MCF 10A (cell line): ENCODE measurements at regions of chr1 and their contacts with region 1.

Region 1: DNA sequence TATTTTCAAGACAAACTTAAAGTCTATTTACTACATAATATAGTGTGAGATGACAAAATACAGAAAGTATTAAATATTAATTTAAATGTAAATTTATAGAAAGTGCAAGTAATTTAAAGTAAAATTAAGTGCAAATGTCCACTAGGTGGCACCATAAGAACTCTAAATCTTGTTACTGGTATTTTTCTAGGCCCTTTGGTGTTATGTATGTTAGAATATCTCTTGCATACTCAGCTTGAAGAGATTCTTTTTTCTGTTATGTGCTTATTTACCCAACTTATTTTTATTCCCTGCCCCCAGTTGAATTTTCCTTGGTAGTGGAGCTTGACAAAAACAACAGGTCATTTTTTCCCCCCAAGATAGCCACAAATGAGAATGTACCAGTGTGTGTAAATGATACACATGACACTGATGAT is 71.5 kb downstream of the RPS6KC1 start:
- DNase-seq: peak; percentile 75
- H3K4me3 Mint-ChIP-seq: no peak overlapping the region
- H3K27ac Mint-ChIP-seq: peak overlapping the region; percentile 61
- H3K4me1 Mint-ChIP-seq: peaks cover 26% of the 10 kb centered on the region
- H3K27me3 Mint-ChIP-seq: no peaks in the 10 kb centered on the region
- CTCF ChIP-seq: peak; percentile 74

Region 2: DNA sequence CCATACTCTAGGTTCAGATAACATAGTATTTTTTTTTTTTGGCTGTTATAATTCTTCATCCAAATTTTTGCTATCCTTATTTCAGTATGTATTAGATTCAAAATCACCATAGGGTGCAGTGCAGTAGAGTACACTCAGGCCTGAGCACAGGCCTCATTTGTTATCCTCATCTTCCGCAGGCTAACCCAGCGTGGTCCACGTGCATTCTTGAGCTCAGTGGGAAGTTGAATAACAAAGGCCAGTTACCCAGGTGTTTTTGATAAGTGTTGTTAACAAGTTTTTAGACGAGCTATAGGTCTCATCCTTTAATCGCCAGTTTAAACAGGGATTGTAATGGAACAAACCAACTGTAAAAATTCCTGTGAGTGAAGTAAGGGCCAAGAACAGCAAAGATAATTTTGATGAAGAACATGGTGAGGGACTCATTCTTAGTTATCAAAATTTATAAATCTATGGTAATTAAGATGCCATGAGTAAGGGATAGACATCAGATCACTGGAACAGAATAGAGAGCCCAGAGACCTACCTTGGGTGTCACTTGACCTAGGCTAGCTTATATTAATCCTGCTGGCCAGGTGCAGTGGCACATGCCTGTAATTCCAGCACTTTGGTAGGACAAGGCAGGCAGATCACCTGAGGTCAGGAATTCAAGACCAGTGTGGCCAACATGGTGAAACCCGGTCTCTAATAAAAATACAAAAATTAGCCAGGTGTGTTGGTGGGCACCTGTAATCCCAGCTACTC is 242.4 kb before region 1 on chr1:
- CTCF ChIA-PET with region 1: no interaction called
- POLR2A ChIA-PET with region 1: no interaction called
- intact Hi-C with region 1: no loop called
- DNase-seq: no peak
- H3K4me3 Mint-ChIP-seq: no peak overlapping the region
- H3K27ac Mint-ChIP-seq: peak overlapping the region; percentile 8
- H3K4me1 Mint-ChIP-seq: peaks cover 5% of the 10 kb centered on the region
- H3K27me3 Mint-ChIP-seq: no peaks in the 10 kb centered on the region
- CTCF ChIP-seq: no peak

Region 3: DNA sequence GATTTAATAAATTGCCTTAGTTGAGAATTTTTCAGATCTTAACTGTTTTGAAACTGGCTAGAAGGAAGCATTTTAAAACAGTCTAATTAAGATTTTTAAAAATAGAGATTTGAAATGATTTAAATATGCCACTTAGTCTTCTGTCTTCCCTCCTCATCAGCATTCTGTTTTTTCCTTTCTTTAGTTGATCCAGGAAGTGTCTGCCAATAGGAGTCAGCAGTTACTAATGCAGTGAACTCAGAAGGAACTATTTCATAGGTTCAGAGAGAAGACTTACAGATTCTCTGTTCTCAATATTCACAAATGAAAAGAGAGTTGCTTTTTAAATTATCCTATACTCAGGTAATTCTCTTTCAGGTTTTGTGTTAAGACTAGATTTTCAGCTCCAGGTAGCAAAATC is 13.1 kb after region 1 on chr1:
- CTCF ChIA-PET with region 1: interaction called, 32 read pairs
- POLR2A ChIA-PET with region 1: interaction called, 5 read pairs
- intact Hi-C with region 1: no loop called
- DNase-seq: no peak
- H3K4me3 Mint-ChIP-seq: no peak overlapping the region
- H3K27ac Mint-ChIP-seq: no peak overlapping the region
- H3K4me1 Mint-ChIP-seq: no peaks in the 10 kb centered on the region
- H3K27me3 Mint-ChIP-seq: no peaks in the 10 kb centered on the region
- CTCF ChIP-seq: no peak

Region 4: DNA sequence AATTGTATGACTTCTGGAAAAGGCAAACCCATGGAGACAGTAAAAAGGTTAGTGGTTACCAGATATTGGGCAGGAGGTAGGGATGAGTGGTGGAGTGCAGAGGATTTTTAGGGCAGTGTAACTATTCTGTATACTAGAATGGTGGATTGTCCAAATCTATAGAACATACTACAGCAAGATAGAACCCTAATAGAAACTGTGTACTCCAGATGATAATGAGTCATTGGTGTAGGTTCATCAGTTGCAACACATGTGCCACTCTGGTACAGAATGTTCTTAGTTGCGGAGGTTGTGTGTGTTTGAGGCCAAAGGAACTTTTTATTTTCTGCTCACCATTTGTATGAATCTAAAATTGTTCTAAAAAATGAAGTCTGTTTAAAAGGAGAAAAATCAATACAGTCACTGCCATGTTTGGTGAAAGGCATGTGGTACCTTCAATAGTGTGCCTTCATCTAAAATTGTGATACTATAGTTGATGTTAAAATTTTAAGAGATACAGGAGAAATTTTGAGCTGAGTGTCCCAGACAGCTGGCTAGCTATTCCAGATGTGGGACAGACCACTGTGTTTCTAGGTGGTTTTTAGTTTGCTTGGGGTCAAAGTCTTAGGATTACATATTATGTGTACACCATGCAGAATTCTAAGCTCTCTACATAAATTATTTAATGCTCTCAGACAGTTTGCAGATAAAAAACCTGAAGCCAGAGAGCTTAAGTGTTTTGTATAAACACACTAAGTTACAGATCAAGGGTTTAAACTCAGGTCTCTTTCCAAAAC is 79.0 kb after region 1 on chr1:
- CTCF ChIA-PET with region 1: interaction called, 6 read pairs
- POLR2A ChIA-PET with region 1: interaction called, 10 read pairs
- intact Hi-C with region 1: no loop called
- DNase-seq: peak; percentile 90
- H3K4me3 Mint-ChIP-seq: peak overlapping the region; percentile 50
- H3K27ac Mint-ChIP-seq: peak overlapping the region; percentile 98
- H3K4me1 Mint-ChIP-seq: peaks cover 28% of the 10 kb centered on the region
- H3K27me3 Mint-ChIP-seq: no peaks in the 10 kb centered on the region
- CTCF ChIP-seq: no peak

Region 5: GRCh38 chr1:213286235-213286634 is 163.7 kb after region 1 on chr1:
- CTCF ChIA-PET with region 1: interaction called, 10 read pairs
- POLR2A ChIA-PET with region 1: no interaction called
- intact Hi-C with region 1: no loop called
- DNase-seq: peak; percentile 21
- H3K4me3 Mint-ChIP-seq: no peak overlapping the region
- H3K27ac Mint-ChIP-seq: no peak overlapping the region
- H3K4me1 Mint-ChIP-seq: peaks cover 12% of the 10 kb centered on the region
- H3K27me3 Mint-ChIP-seq: no peaks in the 10 kb centered on the region
- CTCF ChIP-seq: peak; percentile 11

Region 6: GRCh38 chr1:213564215-213564659 is 441.7 kb after region 1 on chr1:
- CTCF ChIA-PET with region 1: no interaction called
- POLR2A ChIA-PET with region 1: no interaction called
- intact Hi-C with region 1: loop called (anchors 10 kb)
- DNase-seq: peak; percentile 68
- H3K4me3 Mint-ChIP-seq: no peak overlapping the region
- H3K27ac Mint-ChIP-seq: no peak overlapping the region
- H3K4me1 Mint-ChIP-seq: no peaks in the 10 kb centered on the region
- H3K27me3 Mint-ChIP-seq: peaks cover 17% of the 10 kb centered on the region
- CTCF ChIP-seq: peak; percentile 46